Activated CD4-positive, alpha-beta memory T cell treated with anti-CD3 and anti-CD28 coated beads, Interleukin-2, amount 10 ng/mL, durations not matched to agents 7 days and 5 days (primary cell): ENCODE measurements at regions of chr20 and their contacts with region 1.

Region 1: GRCh38 chr20:44966030-44966961 is at the start of gene STK4:
- DNase-seq: peak; percentile 96
- H3K4me3 Mint-ChIP-seq: peak within 1 kb of the TSS; percentile 94
- H3K27ac Mint-ChIP-seq: peak within 1 kb of the TSS; percentile 98
- H3K4me1 Mint-ChIP-seq: peaks cover 68% of the 10 kb centered on the region
- H3K27me3 Mint-ChIP-seq: no peaks in the 10 kb centered on the region
- total RNA-seq, gene STK4: 204 to 213 TPM

Region 2: DNA sequence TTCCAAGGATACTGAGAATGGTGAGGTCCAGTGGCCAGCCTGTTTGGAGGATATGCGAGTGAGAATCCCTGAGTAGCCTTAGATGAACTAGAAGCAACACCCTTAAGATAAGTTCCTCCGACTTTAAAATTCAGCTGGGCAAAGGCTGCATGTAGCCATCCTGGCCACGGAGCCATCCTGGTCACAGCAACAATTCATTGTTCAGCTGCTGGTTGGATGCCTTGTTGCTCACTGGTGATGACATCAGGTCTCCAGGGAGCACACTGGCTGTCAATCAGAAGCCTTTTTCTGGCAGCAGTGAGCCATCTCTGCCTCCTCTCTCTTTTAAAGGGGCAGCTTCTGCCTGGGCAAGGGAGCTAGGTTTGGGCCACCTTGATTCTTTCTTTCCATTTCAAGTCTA is 133.6 kb before region 1 on chr20:
- CTCF ChIA-PET with region 1: no interaction called
- POLR2A ChIA-PET with region 1: no interaction called
- DNase-seq: no peak
- H3K4me3 Mint-ChIP-seq: no peak overlapping the region
- H3K27ac Mint-ChIP-seq: no peak overlapping the region
- H3K4me1 Mint-ChIP-seq: no peaks in the 10 kb centered on the region
- H3K27me3 Mint-ChIP-seq: peaks cover 25% of the 10 kb centered on the region

Region 3: DNA sequence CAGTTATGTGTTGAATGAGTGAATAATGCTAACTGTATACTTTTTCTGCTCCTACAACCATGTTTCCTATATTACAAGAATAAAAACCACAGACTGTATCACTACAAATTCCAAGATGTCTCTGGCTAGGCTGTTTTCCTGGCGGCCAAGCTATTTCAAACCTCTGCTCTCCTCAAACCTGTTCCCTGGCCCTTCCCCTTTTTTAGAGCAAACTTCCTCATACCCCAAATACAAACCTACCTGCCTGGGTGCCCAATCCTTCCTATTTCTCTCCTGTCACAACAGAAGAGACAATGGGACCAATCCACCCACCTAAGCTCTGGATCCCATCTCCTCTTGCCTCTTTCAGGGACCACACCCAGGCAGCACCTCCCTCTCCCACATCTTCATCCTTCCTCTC is 13.6 kb before region 1 on chr20:
- CTCF ChIA-PET with region 1: interaction called, 4 read pairs
- POLR2A ChIA-PET with region 1: interaction called, 10 read pairs
- DNase-seq: no peak
- H3K4me3 Mint-ChIP-seq: no peak overlapping the region
- H3K27ac Mint-ChIP-seq: peak overlapping the region; percentile 56
- H3K4me1 Mint-ChIP-seq: peaks cover 26% of the 10 kb centered on the region
- H3K27me3 Mint-ChIP-seq: no peaks in the 10 kb centered on the region

Region 4: DNA sequence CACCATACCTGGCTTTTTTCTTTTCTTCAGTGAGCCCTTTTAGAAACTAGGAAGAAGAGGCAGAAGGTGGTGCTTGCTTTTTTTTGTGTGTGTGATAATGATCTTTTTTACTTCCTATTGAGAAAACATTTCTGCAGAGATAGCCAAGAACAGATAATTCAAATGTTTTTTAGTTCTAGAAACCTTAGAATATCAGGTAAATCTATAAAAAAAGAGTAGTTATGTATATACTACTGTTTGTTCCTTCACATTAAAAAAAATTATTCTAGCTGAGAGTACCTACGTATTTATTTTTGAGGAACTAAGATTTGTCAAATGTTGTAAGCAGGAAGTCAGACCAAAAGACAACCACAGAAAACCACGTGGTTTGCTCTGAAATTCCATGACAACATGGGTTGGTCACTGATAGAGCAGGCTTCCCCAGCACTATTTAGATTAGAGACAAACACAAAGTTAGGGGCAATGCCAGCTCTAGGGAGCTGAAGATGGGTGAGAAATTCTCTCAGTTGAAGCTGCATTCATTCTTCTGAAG is 12.9 kb after region 1 on chr20:
- CTCF ChIA-PET with region 1: interaction called, 25 read pairs
- POLR2A ChIA-PET with region 1: interaction called, 105 read pairs
- DNase-seq: peak; percentile 79
- H3K4me3 Mint-ChIP-seq: peak overlapping the region; percentile 72
- H3K27ac Mint-ChIP-seq: peak overlapping the region; percentile 99
- H3K4me1 Mint-ChIP-seq: peaks cover 71% of the 10 kb centered on the region
- H3K27me3 Mint-ChIP-seq: no peaks in the 10 kb centered on the region

Region 5: DNA sequence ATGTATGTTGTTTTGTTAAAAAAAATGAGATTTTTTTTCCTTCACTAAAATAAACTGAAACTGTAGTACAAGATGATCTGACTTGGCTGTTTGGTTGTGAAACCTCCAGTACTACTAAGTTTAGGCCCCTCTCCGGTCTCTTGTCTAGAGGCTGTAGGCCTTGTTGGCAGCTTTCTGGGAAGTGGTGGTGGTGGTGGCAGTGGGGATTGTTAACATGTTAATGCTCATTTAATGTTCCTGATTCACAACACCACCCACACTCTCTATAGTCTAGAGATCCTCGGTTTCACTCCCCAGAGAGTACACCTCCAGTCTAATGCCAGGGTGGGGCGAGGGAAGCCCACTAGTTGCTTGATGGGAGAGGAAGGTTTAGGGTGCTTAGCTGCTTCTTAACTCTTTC is 24.1 kb after region 1 on chr20:
- CTCF ChIA-PET with region 1: interaction called, 4 read pairs
- POLR2A ChIA-PET with region 1: interaction called, 17 read pairs
- DNase-seq: peak; percentile 50
- H3K4me3 Mint-ChIP-seq: peak overlapping the region; percentile 72
- H3K27ac Mint-ChIP-seq: peak overlapping the region; percentile 88
- H3K4me1 Mint-ChIP-seq: peaks cover 73% of the 10 kb centered on the region
- H3K27me3 Mint-ChIP-seq: no peaks in the 10 kb centered on the region